Psoas muscle (tissue), 8 donors: ENCODE measurements at regions of chr1 and their contacts with region 1.

Region 1: GRCh38 chr1:25343872-25344271 is 5.7 kb downstream of the TMEM50A start:
- DNase-seq: peak in 1 of 2 donors; percentile 40
- ATAC-seq: peak; percentile 54 to 82 (median 64)
- H3K4me3 ChIP-seq: no peak overlapping the region
- H3K27ac ChIP-seq: peak overlapping the region; percentile 58
- H3K4me1 ChIP-seq: peaks cover 33% of the 10 kb centered on the region
- H3K27me3 ChIP-seq: no peaks in the 10 kb centered on the region
- CTCF ChIP-seq: no peak

Region 2: DNA sequence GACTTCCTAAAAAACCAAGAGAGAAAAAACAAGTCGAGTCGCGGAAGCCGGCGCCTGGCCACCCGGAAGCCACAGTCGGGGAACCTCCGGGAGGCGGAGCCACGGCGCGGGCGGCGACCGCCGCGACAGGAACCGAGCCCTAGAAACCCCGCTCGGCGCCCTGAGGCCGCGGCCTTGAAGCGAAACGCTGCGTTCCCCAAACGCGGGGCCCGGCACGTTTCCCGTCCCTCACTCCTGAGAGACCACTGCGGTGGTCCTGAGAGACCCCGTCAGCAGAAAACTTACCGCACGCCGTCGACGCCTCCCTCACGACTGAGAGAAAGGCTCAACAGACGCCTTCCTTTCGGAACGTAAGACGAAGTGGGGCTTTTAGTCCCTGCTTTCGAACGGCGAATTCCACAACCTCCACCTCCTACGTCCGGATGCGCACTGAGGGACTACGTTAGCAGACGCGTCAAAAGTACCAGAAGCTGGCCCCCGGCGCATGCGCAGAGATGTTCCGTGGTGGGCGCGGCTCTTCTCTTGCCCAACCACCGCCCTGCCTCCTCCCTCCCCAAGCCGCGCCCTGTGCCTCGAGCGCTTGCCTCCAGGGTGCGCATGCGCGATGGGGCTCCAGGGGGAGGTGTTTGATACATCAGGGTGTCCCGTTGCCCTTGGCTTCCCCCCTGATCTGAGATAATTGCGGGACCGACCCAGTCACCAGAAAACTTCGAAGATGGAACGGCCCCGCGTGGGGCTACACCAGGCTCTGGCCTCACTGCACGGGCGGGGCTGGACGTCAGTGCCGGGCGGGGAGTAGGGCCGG is 96.6 kb before region 1 on chr1 and contains the start of gene RSRP1:
- intact Hi-C with region 1: loop called (anchors 5 kb)
- DNase-seq: peak; percentile 100
- ATAC-seq: peak; percentile 91 to 94 (median 92)
- H3K4me3 ChIP-seq: peak within 1 kb of the TSS; percentile 87
- H3K27ac ChIP-seq: peak within 1 kb of the TSS; percentile 99
- H3K4me1 ChIP-seq: peaks cover 30% of the 10 kb centered on the region
- H3K27me3 ChIP-seq: no peaks in the 10 kb centered on the region
- CTCF ChIP-seq: no peak
- total RNA-seq, gene RSRP1: 9.6 to 35.7 (median 20.6) TPM